WTC11 (cell line): ENCODE measurements at regions of chr12 and their contacts with region 1.

Region 1: GRCh38 chr12:107917912-107918800 is 143.7 kb downstream of the ASCL4 start:
- DNase-seq: peak; percentile 50
- ATAC-seq: peak; percentile 98
- H3K4me3 Mint-ChIP-seq: no peak overlapping the region
- H3K27ac Mint-ChIP-seq: no peak overlapping the region
- H3K4me1 Mint-ChIP-seq: no peaks in the 10 kb centered on the region
- H3K27me3 Mint-ChIP-seq: peaks cover 20% of the 10 kb centered on the region
- CTCF ChIP-seq: peak; percentile 46; the same call in 1 of the 2 replicates

Region 2: GRCh38 chr12:107411792-107412535 is 506.2 kb before region 1 on chr12:
- CTCF ChIA-PET with region 1: no interaction called
- POLR2A ChIA-PET with region 1: no interaction called
- DNase-seq: no peak
- ATAC-seq: no peak
- H3K4me3 Mint-ChIP-seq: no peak overlapping the region
- H3K27ac Mint-ChIP-seq: no peak overlapping the region
- H3K4me1 Mint-ChIP-seq: peaks cover 6% of the 10 kb centered on the region; the same call in 1 of the 2 replicates
- H3K27me3 Mint-ChIP-seq: no peaks in the 10 kb centered on the region
- CTCF ChIP-seq: no peak

Region 3: GRCh38 chr12:107929436-107929835 is 11.3 kb after region 1 on chr12:
- CTCF ChIA-PET with region 1: interaction called, 31 read pairs
- POLR2A ChIA-PET with region 1: no interaction called
- DNase-seq: no peak
- ATAC-seq: peak; percentile 97
- H3K4me3 Mint-ChIP-seq: no peak overlapping the region
- H3K27ac Mint-ChIP-seq: no peak overlapping the region
- H3K4me1 Mint-ChIP-seq: 0 out of 2 replicates have a peak, but pooled peaks cover 3% of the 10 kb centered on the region
- H3K27me3 Mint-ChIP-seq: peaks cover 19% of the 10 kb centered on the region
- CTCF ChIP-seq: no peak

Region 4: GRCh38 chr12:108063192-108063591 is 145.0 kb after region 1 on chr12:
- CTCF ChIA-PET with region 1: interaction called, 10 read pairs
- POLR2A ChIA-PET with region 1: no interaction called
- DNase-seq: no peak
- ATAC-seq: peak; percentile 53
- H3K4me3 Mint-ChIP-seq: no peak overlapping the region
- H3K27ac Mint-ChIP-seq: no peak overlapping the region
- H3K4me1 Mint-ChIP-seq: no peaks in the 10 kb centered on the region
- H3K27me3 Mint-ChIP-seq: no peaks in the 10 kb centered on the region
- CTCF ChIP-seq: peak; percentile 84